ENCODE measurements at regions of chr6 and their contacts with region 1.

Region 1: GRCh38 chr6:75526502-75527127 is 33.0 kb upstream of the FILIP1 start:
- DNase-seq: peak; percentile 80
- ATAC-seq: peak; percentile 53; the same call in 1 of the 2 replicates
- H3K4me3 ChIP-seq: no peak overlapping the region
- H3K27ac ChIP-seq: no peak overlapping the region
- H3K4me1 ChIP-seq: peaks cover 4% of the 10 kb centered on the region
- H3K27me3 ChIP-seq: no peaks in the 10 kb centered on the region; the same call in 1 of the 2 replicates
- CTCF ChIP-seq: peak; percentile 86
- POLR2A ChIP-seq: 0 out of 2 replicates have a peak, but pooled peaks have one; percentile 35
- RAD21 ChIP-seq: peak; percentile 94

Region 2: DNA sequence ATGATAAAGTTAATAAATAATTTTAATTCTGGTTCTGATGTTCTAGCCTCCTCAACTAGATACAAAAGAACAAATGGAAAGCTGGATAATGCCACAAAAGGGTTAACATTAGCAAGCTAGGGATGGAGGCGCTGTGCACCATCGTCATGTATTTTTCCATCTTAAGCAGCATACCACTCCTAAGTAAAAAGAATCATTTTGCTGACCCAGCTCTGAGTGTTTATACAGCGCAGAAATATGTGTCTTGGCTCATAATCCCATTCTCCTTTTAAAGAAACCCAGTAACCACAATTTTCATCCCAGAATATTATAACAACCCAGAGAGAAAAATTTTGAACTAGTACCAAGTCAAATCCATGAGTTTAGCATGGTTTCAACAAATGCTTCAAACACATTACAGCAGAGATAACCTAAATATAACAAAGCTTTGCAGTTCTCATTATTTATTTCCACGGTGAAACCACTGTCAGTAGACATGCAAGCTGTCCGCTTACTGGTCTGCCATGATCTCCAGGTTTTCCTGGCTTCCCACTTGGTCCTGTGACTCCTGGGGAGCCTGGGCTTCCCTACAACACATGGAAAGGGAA is 431.9 kb before region 1 on chr6:
- CTCF ChIA-PET with region 1: no interaction called
- POLR2A ChIA-PET with region 1: no interaction called
- dilution Hi-C with region 1: no loop called
- in situ Hi-C with region 1: no loop called
- intact Hi-C with region 1: no loop called
- DNase-seq: peak; percentile 94
- ATAC-seq: peak; percentile 84
- H3K4me3 ChIP-seq: no peak overlapping the region
- H3K27ac ChIP-seq: peak overlapping the region; percentile 86
- H3K4me1 ChIP-seq: peaks cover 18% of the 10 kb centered on the region
- H3K27me3 ChIP-seq: no peaks in the 10 kb centered on the region
- CTCF ChIP-seq: peak; percentile 25; the same call in 1 of the 2 replicates
- POLR2A ChIP-seq: no peak
- RAD21 ChIP-seq: no peak

Region 3: GRCh38 chr6:75266716-75267291 is 259.8 kb before region 1 on chr6:
- CTCF ChIA-PET with region 1: interaction called, 4 read pairs
- POLR2A ChIA-PET with region 1: no interaction called
- dilution Hi-C with region 1: no loop called
- in situ Hi-C with region 1: loop called (anchors 10 kb)
- intact Hi-C with region 1: loop called (anchors 1 kb)
- DNase-seq: peak; percentile 76
- ATAC-seq: peak; percentile 67
- H3K4me3 ChIP-seq: no peak overlapping the region
- H3K27ac ChIP-seq: no peak overlapping the region
- H3K4me1 ChIP-seq: peaks cover 11% of the 10 kb centered on the region
- H3K27me3 ChIP-seq: no peaks in the 10 kb centered on the region
- CTCF ChIP-seq: peak; percentile 83
- POLR2A ChIP-seq: no peak
- RAD21 ChIP-seq: peak; percentile 85

Region 4: DNA sequence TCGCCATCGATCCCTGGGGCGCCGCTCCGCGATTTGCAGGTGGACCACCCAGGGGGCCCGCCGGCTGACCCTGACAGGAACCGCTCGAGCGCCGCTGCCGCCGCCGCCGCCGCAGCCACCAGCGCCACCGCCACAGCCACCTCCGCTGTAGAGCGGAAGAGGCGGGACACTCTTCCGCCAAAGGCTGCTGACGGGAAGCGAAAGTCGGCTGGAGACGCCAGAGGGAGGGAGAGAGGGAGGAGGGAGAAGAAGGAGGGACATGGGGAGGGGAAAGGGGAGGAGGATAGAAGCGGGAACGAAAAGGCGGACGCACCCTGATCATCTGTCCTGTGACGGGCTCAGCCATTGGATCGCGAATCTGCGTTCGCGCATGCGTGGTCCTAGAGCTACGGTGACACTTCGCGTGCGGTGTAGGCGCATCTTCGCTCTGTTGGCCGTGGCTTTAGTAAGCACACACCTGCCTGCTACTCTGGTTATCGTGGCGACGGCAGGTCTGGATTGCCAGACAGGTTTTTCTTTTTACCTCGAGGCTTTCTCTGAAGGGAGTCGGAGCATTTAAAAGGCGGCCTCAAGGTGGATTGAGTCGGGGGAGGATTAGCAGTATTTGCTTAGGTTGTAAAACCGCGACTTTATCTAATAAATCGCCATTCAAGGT is 241.9 kb before region 1 on chr6 and contains the start of gene TMEM30A:
- CTCF ChIA-PET with region 1: no interaction called
- POLR2A ChIA-PET with region 1: no interaction called
- dilution Hi-C with region 1: no loop called
- in situ Hi-C with region 1: no loop called
- intact Hi-C with region 1: loop called (anchors 5 kb)
- DNase-seq: peak; percentile 99
- ATAC-seq: peak; percentile 99
- H3K4me3 ChIP-seq: peak within 1 kb of the TSS; percentile 95
- H3K27ac ChIP-seq: peak within 1 kb of the TSS; percentile 95
- H3K4me1 ChIP-seq: no peaks in the 10 kb centered on the region
- H3K27me3 ChIP-seq: no peaks in the 10 kb centered on the region
- CTCF ChIP-seq: no peak
- POLR2A ChIP-seq: peak; percentile 84
- RAD21 ChIP-seq: no peak
- total RNA-seq, gene TMEM30A: 111 and 206 TPM in 2 replicates

Region 5: DNA sequence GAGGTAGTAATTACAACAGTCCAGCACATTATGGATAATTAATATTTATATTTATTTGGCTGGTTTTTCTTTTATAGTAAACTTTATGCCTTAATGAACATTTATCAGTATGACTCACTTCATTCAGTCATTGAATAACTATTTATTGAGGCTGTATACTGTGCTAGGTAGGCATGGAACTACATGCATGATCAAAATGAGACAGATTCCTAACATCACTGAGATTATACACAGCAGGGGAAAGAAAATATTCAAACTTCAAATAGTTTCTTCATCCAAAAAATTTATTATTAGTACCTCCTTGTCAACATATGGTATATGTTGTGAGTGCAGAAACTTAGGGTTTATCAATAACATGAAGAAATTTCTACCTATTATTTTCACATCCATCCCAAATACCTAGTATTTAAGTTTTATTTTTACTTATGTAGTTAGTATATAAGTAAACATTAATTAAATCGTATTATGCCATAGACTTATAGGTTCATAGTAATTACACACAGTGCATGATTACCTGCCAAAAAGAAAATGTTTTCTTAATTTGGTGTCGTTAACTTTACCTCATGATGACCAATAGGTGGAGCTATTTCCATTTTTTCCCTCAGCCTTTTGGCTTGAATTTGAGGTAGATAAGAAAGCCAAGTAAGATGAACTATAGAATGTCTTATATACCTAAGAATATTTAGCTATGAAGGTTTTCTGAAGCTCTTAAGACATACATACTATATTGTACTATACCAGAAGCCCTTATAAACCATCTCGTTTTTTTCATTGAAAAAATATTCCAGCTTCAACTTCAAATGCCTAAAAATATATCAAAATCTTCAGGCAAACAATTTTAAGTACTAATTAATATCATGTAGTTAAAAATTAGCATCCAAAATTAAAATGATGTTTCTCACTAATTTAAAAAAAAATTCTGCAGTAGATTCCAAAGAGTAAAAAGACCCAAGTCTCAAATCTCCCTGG is 229.5 kb before region 1 on chr6:
- CTCF ChIA-PET with region 1: interaction called, 4 read pairs
- POLR2A ChIA-PET with region 1: interaction called, 4 read pairs
- dilution Hi-C with region 1: no loop called
- in situ Hi-C with region 1: loop called (anchors 5 kb)
- intact Hi-C with region 1: loop called (anchors 1 kb)
- DNase-seq: peak; percentile 71
- ATAC-seq: peak; percentile 53; the same call in 1 of the 2 replicates
- H3K4me3 ChIP-seq: no peak overlapping the region
- H3K27ac ChIP-seq: no peak overlapping the region
- H3K4me1 ChIP-seq: peaks cover 2% of the 10 kb centered on the region; the same call in 1 of the 2 replicates
- H3K27me3 ChIP-seq: no peaks in the 10 kb centered on the region
- CTCF ChIP-seq: peak; percentile 80
- POLR2A ChIP-seq: no peak
- RAD21 ChIP-seq: peak; percentile 85

Region 6: GRCh38 chr6:75368151-75368779 is 158.3 kb before region 1 on chr6:
- CTCF ChIA-PET with region 1: interaction called, 7 read pairs
- POLR2A ChIA-PET with region 1: no interaction called
- dilution Hi-C with region 1: no loop called
- in situ Hi-C with region 1: no loop called
- intact Hi-C with region 1: loop called (anchors 5 kb)
- DNase-seq: peak; percentile 22
- ATAC-seq: no peak
- H3K4me3 ChIP-seq: no peak overlapping the region
- H3K27ac ChIP-seq: no peak overlapping the region
- H3K4me1 ChIP-seq: no peaks in the 10 kb centered on the region; the same call in 1 of the 2 replicates
- H3K27me3 ChIP-seq: peaks cover 1% of the 10 kb centered on the region; the same call in 1 of the 2 replicates
- CTCF ChIP-seq: peak; percentile 43
- POLR2A ChIP-seq: no peak
- RAD21 ChIP-seq: peak; percentile 57

Measured in IMR-90 (cell line).